Activated CD4-positive, alpha-beta T cell treated with anti-CD3 and anti-CD28 coated beads, Interleukin-2, amount 10 ng/mL, durations not matched to agents 7 days and 5 days (primary cell): ENCODE measurements at regions of chr3 and their contacts with region 1.

Region 1: GRCh38 chr3:185942907-185943759 is 5.3 kb upstream of the TRA2B start:
- DNase-seq: peak; percentile 88
- H3K4me3 Mint-ChIP-seq: peak overlapping the region; percentile 28
- H3K27ac Mint-ChIP-seq: peak overlapping the region; percentile 79
- H3K4me1 Mint-ChIP-seq: peaks cover 22% of the 10 kb centered on the region
- H3K27me3 Mint-ChIP-seq: peaks cover 13% of the 10 kb centered on the region

Region 2: GRCh38 chr3:185931777-185932612 is 11.1 kb before region 1 on chr3:
- CTCF ChIA-PET with region 1: interaction called, 17 read pairs
- POLR2A ChIA-PET with region 1: interaction called, 4 read pairs
- DNase-seq: no peak
- H3K4me3 Mint-ChIP-seq: peak overlapping the region; percentile 64
- H3K27ac Mint-ChIP-seq: peak overlapping the region; percentile 73
- H3K4me1 Mint-ChIP-seq: peaks cover 74% of the 10 kb centered on the region
- H3K27me3 Mint-ChIP-seq: no peaks in the 10 kb centered on the region

Region 3: GRCh38 chr3:185959609-185960517 is 16.7 kb after region 1 on chr3:
- CTCF ChIA-PET with region 1: interaction called, 41 read pairs
- POLR2A ChIA-PET with region 1: no interaction called
- DNase-seq: no peak
- H3K4me3 Mint-ChIP-seq: peak overlapping the region; percentile 8
- H3K27ac Mint-ChIP-seq: peak overlapping the region; percentile 70
- H3K4me1 Mint-ChIP-seq: peaks cover 6% of the 10 kb centered on the region
- H3K27me3 Mint-ChIP-seq: no peaks in the 10 kb centered on the region